ENCODE measurements at regions of chr1 and their contacts with region 1.

Region 1: GRCh38 chr1:176522310-176522850 is 59.4 kb downstream of the PAPPA2 start:
- DNase-seq: no peak
- H3K4me3 ChIP-seq: no peak overlapping the region
- H3K27ac ChIP-seq: no peak overlapping the region
- H3K4me1 ChIP-seq: no peaks in the 10 kb centered on the region
- H3K27me3 ChIP-seq: no peaks in the 10 kb centered on the region
- CTCF ChIP-seq: no peak
- POLR2A ChIP-seq: no peak

Region 2: DNA sequence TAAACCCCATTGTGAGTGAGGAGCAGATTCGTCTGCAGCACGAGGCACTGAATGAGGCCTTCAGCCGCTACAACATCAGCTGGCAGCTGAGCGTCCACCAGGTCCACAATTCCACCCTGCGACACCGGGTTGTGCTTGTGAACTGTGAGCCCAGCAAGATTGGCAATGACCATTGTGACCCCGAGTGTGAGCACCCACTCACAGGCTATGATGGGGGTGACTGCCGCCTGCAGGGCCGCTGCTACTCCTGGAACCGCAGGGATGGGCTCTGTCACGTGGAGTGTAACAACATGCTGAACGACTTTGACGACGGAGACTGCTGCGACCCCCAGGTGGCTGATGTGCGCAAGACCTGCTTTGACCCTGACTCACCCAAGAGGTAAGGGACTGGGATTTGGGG is 72.8 kb after region 1 on chr1:
- intact Hi-C with region 1: no loop called
- DNase-seq: no peak
- H3K4me3 ChIP-seq: no peak overlapping the region
- H3K27ac ChIP-seq: no peak overlapping the region
- H3K4me1 ChIP-seq: no peaks in the 10 kb centered on the region
- H3K27me3 ChIP-seq: no peaks in the 10 kb centered on the region
- CTCF ChIP-seq: no peak
- POLR2A ChIP-seq: no peak

Region 3: DNA sequence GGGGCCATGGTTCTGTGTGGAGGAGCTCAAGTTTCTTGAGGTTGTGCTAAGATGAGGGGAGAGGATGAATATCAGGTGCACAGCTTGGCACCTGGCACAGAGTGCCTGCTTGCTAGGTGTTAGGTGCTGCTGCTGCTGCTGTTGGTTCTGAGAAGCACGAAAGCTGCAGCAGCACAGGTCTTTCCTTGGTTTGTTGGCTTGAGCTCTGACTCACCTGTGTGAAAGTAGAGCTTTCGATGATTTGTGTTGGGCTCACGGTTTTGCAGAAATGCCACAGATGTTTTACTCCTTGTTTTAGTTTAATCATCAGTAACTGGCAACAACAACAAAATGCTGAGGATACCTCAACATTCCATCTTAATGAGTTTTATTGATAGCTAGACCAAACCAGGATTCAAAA is 870.0 kb after region 1 on chr1:
- intact Hi-C with region 1: loop called (anchors 5 kb)
- DNase-seq: no peak
- H3K4me3 ChIP-seq: no peak overlapping the region
- H3K27ac ChIP-seq: no peak overlapping the region
- H3K4me1 ChIP-seq: no peaks in the 10 kb centered on the region
- H3K27me3 ChIP-seq: no peaks in the 10 kb centered on the region
- CTCF ChIP-seq: no peak
- POLR2A ChIP-seq: no peak

Region 4: DNA sequence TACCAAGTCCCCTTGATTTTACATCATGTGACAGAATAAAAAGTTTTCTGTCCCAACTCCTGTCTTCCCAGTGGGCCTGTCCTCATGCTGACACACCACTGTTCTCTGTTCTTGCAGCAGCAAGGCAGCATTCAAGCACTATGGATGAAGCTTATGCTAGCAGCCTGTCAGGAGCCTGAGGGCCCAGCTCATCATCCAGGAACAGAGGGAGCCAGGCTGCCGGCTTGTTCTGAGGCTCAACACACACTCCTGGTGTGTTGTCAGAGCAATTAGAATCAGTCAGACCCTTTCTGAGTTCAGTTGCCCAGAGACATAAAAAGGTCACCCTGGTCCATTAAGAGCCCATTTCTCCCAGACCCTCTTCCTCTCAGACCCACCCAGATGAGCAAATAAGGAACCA is 1164.6 kb after region 1 on chr1:
- intact Hi-C with region 1: no loop called
- DNase-seq: no peak
- H3K4me3 ChIP-seq: no peak overlapping the region
- H3K27ac ChIP-seq: no peak overlapping the region
- H3K4me1 ChIP-seq: no peaks in the 10 kb centered on the region
- H3K27me3 ChIP-seq: no peaks in the 10 kb centered on the region
- CTCF ChIP-seq: no peak
- POLR2A ChIP-seq: no peak